ENCODE measurements at regions of chr19 and their contacts with region 1.

Region 1: DNA sequence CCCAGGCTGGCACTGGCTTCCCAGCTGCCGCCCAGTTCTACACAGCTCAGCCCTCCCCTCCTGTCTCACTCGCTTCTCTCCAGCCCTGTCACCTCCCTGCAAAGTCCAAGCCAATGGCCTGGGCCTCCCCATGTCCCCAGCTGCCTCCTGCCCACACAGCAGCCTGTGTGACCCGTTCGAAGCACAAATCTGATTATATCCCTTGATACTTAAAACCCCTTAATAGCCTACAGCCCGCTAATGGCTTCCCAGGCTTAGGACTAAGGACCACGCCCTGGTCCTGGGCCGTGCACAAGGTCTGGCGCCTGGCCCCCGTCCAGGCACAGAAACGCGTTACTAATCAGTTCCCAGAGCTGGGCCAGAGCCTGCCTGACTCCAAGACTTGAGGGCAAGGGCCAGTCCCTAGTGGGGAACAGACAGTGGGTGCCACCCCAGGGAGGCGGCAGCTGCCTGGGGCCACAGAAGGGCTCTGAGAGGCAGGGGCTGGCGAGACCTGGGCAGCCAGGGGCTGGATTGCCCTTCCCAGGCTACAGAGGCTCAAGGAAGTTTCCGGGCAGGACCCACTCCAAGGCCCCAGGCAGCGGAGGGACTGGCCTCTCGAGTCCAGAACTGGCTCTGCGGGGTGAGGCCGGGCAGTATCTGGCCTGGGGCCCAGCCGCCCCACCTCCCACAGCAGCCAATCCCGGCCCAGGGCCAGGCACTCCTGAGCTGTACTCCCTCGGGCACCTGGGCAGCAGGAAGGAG is 10.4 kb downstream of the XAB2 start:
- DNase-seq: peak; percentile 76
- H3K4me3 Mint-ChIP-seq: no peak overlapping the region
- H3K27ac Mint-ChIP-seq: peak overlapping the region; percentile 86
- H3K4me1 Mint-ChIP-seq: peaks cover 15% of the 10 kb centered on the region
- H3K27me3 Mint-ChIP-seq: no peaks in the 10 kb centered on the region
- CTCF ChIP-seq: no peak

Region 2: GRCh38 chr19:7522072-7522922 is 96.6 kb before region 1 on chr19 and contains the start of gene MCOLN1:
- CTCF ChIA-PET with region 1: no interaction called
- POLR2A ChIA-PET with region 1: no interaction called
- intact Hi-C with region 1: no loop called
- DNase-seq: peak; percentile 97
- H3K4me3 Mint-ChIP-seq: peak within 1 kb of the TSS; percentile 70
- H3K27ac Mint-ChIP-seq: peak within 1 kb of the TSS; percentile 33
- H3K4me1 Mint-ChIP-seq: peaks cover 9% of the 10 kb centered on the region
- H3K27me3 Mint-ChIP-seq: no peaks in the 10 kb centered on the region
- CTCF ChIP-seq: no peak
- total RNA-seq, gene MCOLN1: 10.8 and 13.9 TPM in 2 replicates

Region 3: GRCh38 chr19:7595466-7596133 is 23.3 kb before region 1 on chr19 and contains the start of gene CAMSAP3:
- CTCF ChIA-PET with region 1: no interaction called
- POLR2A ChIA-PET with region 1: interaction called, 10 read pairs
- intact Hi-C with region 1: no loop called
- DNase-seq: peak; percentile 36
- H3K4me3 Mint-ChIP-seq: peak within 1 kb of the TSS; percentile 71
- H3K27ac Mint-ChIP-seq: no peak within 1 kb of the TSS
- H3K4me1 Mint-ChIP-seq: peaks cover 5% of the 10 kb centered on the region
- H3K27me3 Mint-ChIP-seq: no peaks in the 10 kb centered on the region
- CTCF ChIP-seq: no peak
- total RNA-seq, gene CAMSAP3: 6.7 and 9.1 TPM in 2 replicates

Region 4: GRCh38 chr19:7605490-7606222 is 13.3 kb before region 1 on chr19:
- CTCF ChIA-PET with region 1: interaction called, 3 read pairs
- POLR2A ChIA-PET with region 1: interaction called, 14 read pairs
- intact Hi-C with region 1: no loop called
- DNase-seq: peak; percentile 42
- H3K4me3 Mint-ChIP-seq: no peak overlapping the region
- H3K27ac Mint-ChIP-seq: no peak overlapping the region
- H3K4me1 Mint-ChIP-seq: no peaks in the 10 kb centered on the region
- H3K27me3 Mint-ChIP-seq: no peaks in the 10 kb centered on the region
- CTCF ChIP-seq: no peak

Region 5: DNA sequence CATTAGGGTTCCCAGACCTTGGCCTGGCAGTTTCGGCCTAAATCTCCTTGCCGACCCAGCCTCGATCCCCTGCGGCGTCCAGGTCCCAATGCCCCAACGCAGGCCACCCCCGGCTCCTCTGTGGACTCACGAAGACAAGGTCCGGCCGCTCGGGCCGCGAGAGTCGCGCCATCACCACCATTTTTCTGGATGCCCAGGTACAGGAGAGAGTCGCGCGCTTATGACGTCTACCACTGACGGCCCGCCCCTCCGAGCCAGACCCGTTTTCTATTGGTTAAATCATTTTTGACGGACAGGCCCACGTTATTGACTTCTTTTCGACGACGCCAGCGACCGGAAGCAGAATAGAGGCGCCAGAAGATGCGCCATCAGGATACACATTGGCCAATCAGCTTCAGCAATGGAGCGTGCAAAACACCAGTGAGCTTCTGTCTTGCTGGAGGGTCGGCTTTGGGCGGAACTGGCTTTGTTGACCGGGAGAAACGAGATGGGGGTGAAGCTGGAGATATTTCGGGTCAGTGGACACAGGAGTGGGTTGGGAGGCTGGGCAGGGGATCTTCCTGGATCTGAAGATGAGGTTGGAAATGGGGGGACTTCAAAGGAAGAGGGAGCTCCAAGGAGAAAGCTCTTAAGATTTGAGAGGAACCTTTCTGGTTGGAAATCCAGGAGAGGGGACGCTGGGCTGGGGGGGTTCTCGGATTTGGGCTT is 10.6 kb after region 1 on chr19 and contains the starts of genes PET100 and XAB2:
- CTCF ChIA-PET with region 1: interaction called, 3 read pairs
- POLR2A ChIA-PET with region 1: interaction called, 41 read pairs
- intact Hi-C with region 1: no loop called
- DNase-seq: peak; percentile 99
- H3K4me3 Mint-ChIP-seq: peak within 1 kb of the TSS; percentile 95
- H3K27ac Mint-ChIP-seq: peak within 1 kb of the TSS; percentile 100
- H3K4me1 Mint-ChIP-seq: peaks cover 23% of the 10 kb centered on the region
- H3K27me3 Mint-ChIP-seq: no peaks in the 10 kb centered on the region
- CTCF ChIP-seq: no peak
- total RNA-seq, gene PET100: 53.9 and 101 TPM in 2 replicates
- total RNA-seq, gene XAB2: 28.7 and 29.4 TPM in 2 replicates